ENCODE measurements at regions of chr20 and their contacts with region 1.

Region 1: DNA sequence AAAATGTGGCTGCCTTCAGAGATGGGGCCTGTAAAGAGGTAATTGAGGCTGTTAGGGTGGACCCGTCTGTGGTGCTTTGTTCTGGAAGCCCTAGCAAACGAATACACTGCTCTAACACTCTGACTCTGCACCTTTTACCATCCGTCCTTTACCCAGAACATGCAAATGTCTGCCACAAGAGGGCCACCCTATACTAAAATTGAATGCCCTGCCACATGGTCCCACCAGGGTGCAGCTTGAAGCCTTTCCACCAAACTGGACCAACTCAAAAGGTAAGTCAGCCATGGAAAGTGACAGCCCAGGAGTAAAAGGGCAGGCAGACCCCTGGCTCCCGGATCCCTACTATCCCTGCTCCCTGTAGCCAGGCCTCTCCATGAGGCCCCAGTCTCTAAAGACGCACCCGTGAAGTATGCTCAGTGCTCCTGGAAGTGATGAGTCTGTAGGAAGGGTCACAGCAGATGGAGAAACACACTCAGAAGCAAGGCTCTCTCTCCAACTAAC is 5.8 kb upstream of the BFSP1 start:
- DNase-seq: no peak
- ATAC-seq: peak; percentile 98
- H3K4me3 ChIP-seq: no peak overlapping the region
- H3K27ac ChIP-seq: no peak overlapping the region
- H3K4me1 ChIP-seq: peaks cover 6% of the 10 kb centered on the region
- H3K27me3 ChIP-seq: no peaks in the 10 kb centered on the region
- CTCF ChIP-seq: peak; percentile 83 to 93 (median 84)
- EP300 ChIP-seq: no peak
- POLR2A ChIP-seq: no peak
- RAD21 ChIP-seq: peak; percentile 95

Region 2: GRCh38 chr20:17617551-17618223 is 80.7 kb after region 1 on chr20:
- CTCF ChIA-PET with region 1: interaction called, 9 read pairs
- POLR2A ChIA-PET with region 1: no interaction called
- RAD21 ChIA-PET with region 1: interaction called, 5 read pairs
- SMC1A ChIA-PET with region 1: interaction called, 6 read pairs
- in situ Hi-C with region 1: loop called (anchors 5 kb)
- intact Hi-C with region 1: loop called (anchors 1 kb)
- DNase-seq: no peak
- ATAC-seq: peak; percentile 82
- H3K4me3 ChIP-seq: no peak overlapping the region
- H3K27ac ChIP-seq: no peak overlapping the region
- H3K4me1 ChIP-seq: no peaks in the 10 kb centered on the region
- H3K27me3 ChIP-seq: no peaks in the 10 kb centered on the region
- CTCF ChIP-seq: peak; percentile 47 to 61 (median 57); a peak in 5 of 6 replicates
- EP300 ChIP-seq: no peak
- POLR2A ChIP-seq: no peak
- RAD21 ChIP-seq: peak; percentile 89

Measured in GM12878 (cell line).